Activated CD4-positive, alpha-beta T cell treated with anti-CD3 and anti-CD28 coated beads for 36 hours (primary cell): ENCODE measurements at regions of chr6 and their contacts with region 1.

Region 1: DNA sequence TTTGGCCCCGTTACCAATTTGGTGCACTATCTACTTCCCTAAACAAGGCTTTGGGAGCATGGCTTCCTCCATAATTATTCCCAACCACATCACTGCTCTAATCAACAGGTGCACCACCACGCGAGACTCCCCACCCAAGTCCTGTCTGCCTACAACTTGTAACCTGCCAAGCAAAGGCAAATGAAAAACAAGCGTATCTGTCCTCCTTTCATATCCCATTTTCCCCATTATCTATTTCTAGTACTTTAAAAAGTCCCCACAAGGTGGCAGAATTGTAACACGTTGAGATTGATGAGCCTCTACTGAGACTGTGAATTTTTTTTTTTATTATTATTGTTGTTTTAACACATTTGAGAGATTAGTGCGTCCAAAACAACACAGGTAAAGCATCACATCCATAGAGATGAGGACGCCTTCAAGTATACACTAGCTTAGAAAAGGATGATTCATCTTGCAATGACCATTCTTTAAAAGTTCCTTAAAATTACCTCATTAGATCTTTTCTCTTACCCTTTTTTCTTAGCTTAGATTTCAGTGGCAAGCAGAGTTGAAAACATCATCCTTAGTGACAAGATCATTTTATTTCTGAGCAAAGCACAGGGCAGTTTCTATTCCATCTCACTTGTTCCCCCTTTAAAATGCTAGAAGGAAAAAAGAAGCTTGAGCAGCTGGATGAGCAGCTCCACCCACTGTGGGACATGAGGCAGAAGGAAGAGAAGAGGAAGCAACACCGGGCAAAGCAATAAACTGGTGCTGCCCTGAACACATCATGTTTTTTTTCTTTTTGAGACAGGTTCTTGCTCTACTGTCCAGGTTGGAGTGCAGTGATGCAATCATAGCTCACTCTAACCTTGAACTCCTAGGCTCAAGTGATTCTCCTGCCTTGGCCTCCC is 210.8 kb downstream of the ARHGAP18 start:
- DNase-seq: no peak
- ATAC-seq: peak; percentile 56
- H3K4me3 Mint-ChIP-seq: peak overlapping the region; percentile 47
- H3K27ac Mint-ChIP-seq: peak overlapping the region; percentile 88
- H3K4me1 Mint-ChIP-seq: peaks cover 66% of the 10 kb centered on the region
- H3K27me3 Mint-ChIP-seq: no peaks in the 10 kb centered on the region

Region 2: DNA sequence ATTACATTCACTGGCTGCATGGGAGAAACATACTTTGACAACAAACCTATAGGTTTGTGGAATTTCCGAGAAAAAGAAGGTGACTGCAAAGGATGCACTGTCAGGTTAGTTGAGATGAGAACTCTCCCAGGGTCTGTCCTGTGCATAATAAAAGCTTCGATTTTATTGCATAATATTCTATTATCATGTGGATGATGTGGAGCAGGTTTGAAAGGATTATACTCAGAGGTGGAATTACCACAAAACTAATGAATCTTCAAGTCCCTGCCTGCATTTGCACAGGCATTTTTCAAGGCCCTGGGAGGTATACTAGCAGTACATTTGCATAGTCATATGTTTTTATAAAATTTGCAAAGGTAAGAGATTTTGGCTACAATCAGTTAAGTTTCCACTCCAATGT is 39.0 kb before region 1 on chr6:
- CTCF ChIA-PET with region 1: no interaction called
- POLR2A ChIA-PET with region 1: no interaction called
- intact Hi-C with region 1: no loop called
- DNase-seq: no peak
- ATAC-seq: no peak
- H3K4me3 Mint-ChIP-seq: no peak overlapping the region
- H3K27ac Mint-ChIP-seq: no peak overlapping the region
- H3K4me1 Mint-ChIP-seq: peaks cover 5% of the 10 kb centered on the region
- H3K27me3 Mint-ChIP-seq: no peaks in the 10 kb centered on the region

Region 3: GRCh38 chr6:129567374-129567773 is 68.2 kb after region 1 on chr6:
- CTCF ChIA-PET with region 1: interaction called, 27 read pairs
- POLR2A ChIA-PET with region 1: no interaction called
- intact Hi-C with region 1: loop called (anchors 1 to 2 kb)
- DNase-seq: peak; percentile 76
- ATAC-seq: peak; percentile 68
- H3K4me3 Mint-ChIP-seq: no peak overlapping the region
- H3K27ac Mint-ChIP-seq: no peak overlapping the region
- H3K4me1 Mint-ChIP-seq: peaks cover 3% of the 10 kb centered on the region
- H3K27me3 Mint-ChIP-seq: no peaks in the 10 kb centered on the region

Region 4: DNA sequence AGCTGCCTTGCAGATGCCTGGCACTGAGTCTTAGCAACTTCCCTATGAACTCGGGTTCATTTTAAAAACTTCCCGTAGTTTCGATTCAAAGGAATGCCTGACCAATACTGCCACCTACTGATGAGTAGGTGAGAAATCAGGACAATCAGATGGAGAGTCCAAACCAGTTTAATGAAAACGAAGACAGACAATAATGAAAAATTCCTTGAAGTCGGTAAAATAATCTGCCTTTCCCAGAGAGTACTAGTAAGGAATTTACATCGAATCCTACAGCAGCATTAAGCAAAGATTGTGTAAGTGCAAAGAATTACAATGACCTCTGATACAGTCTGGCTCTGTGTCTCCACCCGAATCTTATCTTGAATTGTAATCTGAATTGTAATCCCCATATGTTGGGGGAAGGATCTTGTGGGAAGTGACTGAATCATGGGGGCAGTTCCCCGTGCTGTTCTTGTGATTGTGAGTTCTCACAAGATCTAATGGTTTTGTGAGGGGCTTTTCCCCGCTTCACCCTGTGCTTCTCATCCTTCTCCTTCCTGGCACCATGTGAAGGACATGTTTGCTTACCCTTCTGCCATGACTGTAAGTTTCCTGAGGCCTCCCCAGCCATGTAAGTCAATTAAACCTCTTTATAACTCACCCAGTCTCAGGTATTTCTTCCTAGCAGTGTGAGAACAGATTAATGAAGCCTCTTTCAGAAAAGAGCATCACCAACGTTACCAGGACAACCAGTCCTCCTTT is 76.4 kb after region 1 on chr6:
- CTCF ChIA-PET with region 1: interaction called, 8 read pairs
- POLR2A ChIA-PET with region 1: no interaction called
- intact Hi-C with region 1: loop called (anchors 2 kb)
- DNase-seq: no peak
- ATAC-seq: no peak
- H3K4me3 Mint-ChIP-seq: no peak overlapping the region
- H3K27ac Mint-ChIP-seq: no peak overlapping the region
- H3K4me1 Mint-ChIP-seq: peaks cover 8% of the 10 kb centered on the region
- H3K27me3 Mint-ChIP-seq: no peaks in the 10 kb centered on the region

Region 5: GRCh38 chr6:129730477-129731165 is 231.4 kb after region 1 on chr6:
- CTCF ChIA-PET with region 1: interaction called, 4 read pairs
- POLR2A ChIA-PET with region 1: no interaction called
- intact Hi-C with region 1: loop called (anchors 1 to 5 kb)
- DNase-seq: peak; percentile 27
- ATAC-seq: peak; percentile 39
- H3K4me3 Mint-ChIP-seq: no peak overlapping the region
- H3K27ac Mint-ChIP-seq: peak overlapping the region; percentile 68
- H3K4me1 Mint-ChIP-seq: peaks cover 9% of the 10 kb centered on the region
- H3K27me3 Mint-ChIP-seq: no peaks in the 10 kb centered on the region

Region 6: DNA sequence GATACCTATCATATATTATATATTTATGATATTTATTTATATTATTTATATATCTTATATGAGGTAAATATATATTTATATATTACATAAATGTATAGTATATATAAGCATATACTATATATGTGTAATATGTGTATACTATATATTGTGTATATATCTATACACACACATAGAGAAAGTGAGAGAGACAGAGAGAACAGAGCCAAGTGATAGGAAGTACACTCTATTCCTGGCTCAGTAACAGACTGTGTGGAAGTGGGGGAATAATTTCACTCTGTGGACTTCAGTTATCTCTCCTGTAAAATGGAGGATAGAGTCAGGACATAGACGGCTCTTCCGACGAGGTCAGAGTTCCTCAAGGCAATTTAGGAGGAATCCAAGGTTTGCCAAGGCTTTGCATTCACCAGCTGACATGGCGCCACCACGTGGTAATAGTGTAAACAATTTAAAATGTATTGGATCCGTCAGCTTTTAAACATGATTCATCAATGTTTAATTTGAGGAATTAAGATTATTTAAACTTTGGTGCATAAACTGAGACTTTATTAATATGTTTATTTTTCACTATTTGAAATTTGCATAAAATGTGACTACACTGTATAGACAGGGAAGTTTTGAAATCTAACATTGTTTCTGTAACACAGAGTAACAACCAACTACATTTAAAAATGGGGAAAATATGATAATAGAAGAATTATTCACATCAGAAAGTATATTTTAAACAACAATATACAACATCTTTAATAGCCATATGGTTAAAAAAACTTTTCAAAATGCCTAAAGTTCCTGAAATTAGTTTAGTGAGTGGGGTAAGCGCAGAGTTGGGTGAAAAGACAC is 437.4 kb after region 1 on chr6:
- CTCF ChIA-PET with region 1: interaction called, 3 read pairs
- POLR2A ChIA-PET with region 1: no interaction called
- intact Hi-C with region 1: loop called (anchors 1 to 5 kb)
- DNase-seq: peak; percentile 59
- ATAC-seq: no peak
- H3K4me3 Mint-ChIP-seq: no peak overlapping the region
- H3K27ac Mint-ChIP-seq: no peak overlapping the region
- H3K4me1 Mint-ChIP-seq: no peaks in the 10 kb centered on the region
- H3K27me3 Mint-ChIP-seq: peaks cover 9% of the 10 kb centered on the region